OCI-LY7 (cell line): ENCODE measurements at regions of chr3 and their contacts with region 1.

Region 1: GRCh38 chr3:119240591-119241434 is at the start of gene B4GALT4:
- DNase-seq: peak; percentile 93
- H3K4me3 ChIP-seq: peak within 1 kb of the TSS; percentile 78
- H3K27ac ChIP-seq: peak within 1 kb of the TSS; percentile 62
- H3K4me1 ChIP-seq: peaks cover 13% of the 10 kb centered on the region
- CTCF ChIP-seq: no peak
- total RNA-seq, gene B4GALT4: 17.3 and 20.3 TPM in 2 replicates

Region 2: DNA sequence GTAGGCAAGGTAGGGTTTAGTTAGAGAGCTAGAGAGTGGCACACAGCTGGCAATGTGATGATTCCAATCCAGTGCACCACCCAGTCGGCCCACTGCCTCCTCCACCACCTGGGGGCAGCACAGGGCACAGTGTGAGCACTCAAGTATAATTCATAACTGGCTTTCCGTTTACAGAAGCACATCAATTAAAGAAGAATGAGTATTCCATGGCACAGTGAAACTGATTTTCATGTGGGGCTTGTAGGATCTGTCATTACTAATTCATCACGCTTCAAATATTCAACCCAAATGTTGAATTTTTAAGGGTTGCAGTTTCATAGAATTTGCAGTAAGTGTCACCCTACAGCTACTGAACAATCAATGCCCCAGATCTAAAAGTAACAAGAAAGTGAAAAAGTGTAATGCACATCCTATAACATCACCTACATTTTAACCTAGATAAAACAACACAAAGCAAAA is 356.0 kb before region 1 on chr3:
- CTCF ChIA-PET with region 1: interaction called, 7 read pairs
- POLR2A ChIA-PET with region 1: no interaction called
- intact Hi-C with region 1: loop called (anchors 2 kb)
- DNase-seq: peak; percentile 55
- H3K4me3 ChIP-seq: no peak overlapping the region
- H3K27ac ChIP-seq: no peak overlapping the region
- H3K4me1 ChIP-seq: no peaks in the 10 kb centered on the region
- CTCF ChIP-seq: peak; percentile 94

Region 3: GRCh38 chr3:119034256-119035013 is 206.4 kb before region 1 on chr3 and contains the start of gene IGSF11:
- CTCF ChIA-PET with region 1: interaction called, 3 read pairs
- POLR2A ChIA-PET with region 1: no interaction called
- intact Hi-C with region 1: loop called (anchors 2 kb)
- DNase-seq: peak; percentile 26
- H3K4me3 ChIP-seq: peak within 1 kb of the TSS; percentile 29
- H3K27ac ChIP-seq: no peak within 1 kb of the TSS
- H3K4me1 ChIP-seq: no peaks in the 10 kb centered on the region
- CTCF ChIP-seq: no peak; the same call in 1 of the 2 replicates
- total RNA-seq, gene IGSF11: not detected in 2 replicates

Region 4: GRCh38 chr3:119145500-119146191 is 95.2 kb before region 1 on chr3 and contains the start of gene TEX55:
- CTCF ChIA-PET with region 1: no interaction called
- POLR2A ChIA-PET with region 1: interaction called, 3 read pairs
- intact Hi-C with region 1: loop called (anchors 1 kb)
- DNase-seq: peak; percentile 31
- H3K4me3 ChIP-seq: no peak within 1 kb of the TSS
- H3K27ac ChIP-seq: no peak within 1 kb of the TSS
- H3K4me1 ChIP-seq: no peaks in the 10 kb centered on the region
- CTCF ChIP-seq: peak; percentile 79
- total RNA-seq, gene TEX55: not detected in 2 replicates

Region 5: GRCh38 chr3:119257682-119258410 is 17.0 kb after region 1 on chr3:
- CTCF ChIA-PET with region 1: interaction called, 4 read pairs
- POLR2A ChIA-PET with region 1: interaction called, 11 read pairs
- intact Hi-C with region 1: no loop called
- DNase-seq: peak; percentile 7
- H3K4me3 ChIP-seq: no peak overlapping the region
- H3K27ac ChIP-seq: no peak overlapping the region
- H3K4me1 ChIP-seq: peaks cover 18% of the 10 kb centered on the region
- CTCF ChIP-seq: no peak

Region 6: GRCh38 chr3:119293871-119294695 is 53.3 kb after region 1 on chr3 and contains the start of gene ARHGAP31:
- CTCF ChIA-PET with region 1: interaction called, 4 read pairs
- POLR2A ChIA-PET with region 1: interaction called, 3 read pairs
- intact Hi-C with region 1: loop called (anchors 1 kb)
- DNase-seq: peak; percentile 70
- H3K4me3 ChIP-seq: peak within 1 kb of the TSS; percentile 71
- H3K27ac ChIP-seq: peak within 1 kb of the TSS; percentile 44
- H3K4me1 ChIP-seq: peaks cover 37% of the 10 kb centered on the region
- CTCF ChIP-seq: no peak
- total RNA-seq, gene ARHGAP31: 4.1 TPM in 2 replicates

Region 7: GRCh38 chr3:119657887-119658702 is 417.3 kb after region 1 on chr3:
- CTCF ChIA-PET with region 1: no interaction called
- POLR2A ChIA-PET with region 1: no interaction called
- intact Hi-C with region 1: no loop called
- DNase-seq: no peak
- H3K4me3 ChIP-seq: no peak overlapping the region
- H3K27ac ChIP-seq: no peak overlapping the region
- H3K4me1 ChIP-seq: no peaks in the 10 kb centered on the region
- CTCF ChIP-seq: no peak